AG04449 (cell line): ENCODE measurements at regions of chr5 and their contacts with region 1.

Region 1: DNA sequence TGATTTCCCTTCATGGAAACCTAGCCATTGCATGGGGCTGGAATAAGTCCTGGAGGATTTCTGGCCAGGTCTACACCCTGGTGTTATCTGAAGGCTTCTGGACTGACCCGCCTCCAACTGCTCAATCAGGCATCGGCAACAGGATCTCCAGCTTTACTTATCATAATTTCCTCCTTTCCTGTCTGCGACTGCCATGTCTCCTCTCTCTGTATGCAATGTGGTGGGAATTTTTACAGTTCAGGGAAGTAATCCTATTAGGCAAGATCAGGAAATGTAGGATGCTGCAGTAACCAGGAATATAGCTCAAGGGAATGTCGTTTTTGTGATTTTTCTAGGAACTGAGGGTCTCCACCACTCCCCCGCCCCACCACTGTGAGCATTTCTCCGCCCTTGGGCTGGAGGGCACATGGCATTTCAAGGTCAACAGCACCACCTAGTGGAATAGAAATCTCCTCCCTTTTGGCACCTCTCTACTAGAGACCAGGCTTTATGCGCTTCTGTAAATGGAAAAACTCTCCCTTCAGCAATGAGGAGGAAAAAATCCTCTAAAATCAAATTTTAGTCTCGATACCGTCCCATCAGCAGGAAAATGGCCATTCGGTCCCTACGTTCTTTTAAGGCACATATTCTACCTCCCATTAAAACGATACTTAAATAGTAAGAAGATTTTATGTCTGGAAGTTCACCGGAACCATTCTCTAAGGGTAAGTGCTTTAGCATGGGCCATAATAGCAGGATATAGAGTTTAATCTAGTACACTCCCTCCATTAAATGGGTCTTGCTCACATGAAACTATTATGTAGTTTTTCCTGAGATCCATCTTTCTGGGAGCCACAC is 93.0 kb downstream of the YTHDC2 start:
- DNase-seq: no peak
- H3K4me3 ChIP-seq: no peak overlapping the region
- CTCF ChIP-seq: peak; percentile 61

Region 2: GRCh38 chr5:113330533-113331208 is 275.8 kb before region 1 on chr5:
- CTCF ChIA-PET with region 1: no interaction called
- POLR2A ChIA-PET with region 1: no interaction called
- DNase-seq: no peak
- H3K4me3 ChIP-seq: no peak overlapping the region
- CTCF ChIP-seq: peak; percentile 10

Region 3: DNA sequence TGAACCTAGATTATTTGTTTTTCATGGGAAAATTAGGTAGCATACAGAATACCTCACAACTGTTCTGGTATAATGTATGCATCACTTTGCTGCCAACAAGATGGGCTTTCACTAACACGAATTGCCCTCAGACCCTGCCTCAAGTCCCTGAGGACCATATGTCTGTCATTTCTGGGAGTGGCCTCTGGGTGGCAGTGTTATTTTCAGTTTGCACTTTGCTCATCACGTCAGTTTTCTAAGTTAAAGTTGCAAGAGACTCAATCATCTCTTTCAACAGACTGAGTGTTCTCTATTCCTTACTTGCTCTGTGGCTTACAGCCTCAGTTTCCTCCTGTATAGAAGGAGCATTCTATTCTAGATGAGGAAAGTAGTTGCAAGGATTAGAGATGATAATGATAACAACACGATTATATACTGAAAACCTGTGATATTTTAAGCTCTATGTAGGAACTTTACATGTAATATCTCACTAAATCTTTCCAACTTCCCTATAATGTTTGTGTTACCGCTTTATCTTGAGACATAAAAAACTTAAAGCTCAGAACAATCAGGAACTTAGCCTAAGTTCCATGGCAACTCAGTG is 227.5 kb before region 1 on chr5:
- CTCF ChIA-PET with region 1: interaction called, 41 read pairs
- POLR2A ChIA-PET with region 1: no interaction called
- DNase-seq: peak; percentile 3
- H3K4me3 ChIP-seq: no peak overlapping the region
- CTCF ChIP-seq: peak; percentile 71

Region 4: DNA sequence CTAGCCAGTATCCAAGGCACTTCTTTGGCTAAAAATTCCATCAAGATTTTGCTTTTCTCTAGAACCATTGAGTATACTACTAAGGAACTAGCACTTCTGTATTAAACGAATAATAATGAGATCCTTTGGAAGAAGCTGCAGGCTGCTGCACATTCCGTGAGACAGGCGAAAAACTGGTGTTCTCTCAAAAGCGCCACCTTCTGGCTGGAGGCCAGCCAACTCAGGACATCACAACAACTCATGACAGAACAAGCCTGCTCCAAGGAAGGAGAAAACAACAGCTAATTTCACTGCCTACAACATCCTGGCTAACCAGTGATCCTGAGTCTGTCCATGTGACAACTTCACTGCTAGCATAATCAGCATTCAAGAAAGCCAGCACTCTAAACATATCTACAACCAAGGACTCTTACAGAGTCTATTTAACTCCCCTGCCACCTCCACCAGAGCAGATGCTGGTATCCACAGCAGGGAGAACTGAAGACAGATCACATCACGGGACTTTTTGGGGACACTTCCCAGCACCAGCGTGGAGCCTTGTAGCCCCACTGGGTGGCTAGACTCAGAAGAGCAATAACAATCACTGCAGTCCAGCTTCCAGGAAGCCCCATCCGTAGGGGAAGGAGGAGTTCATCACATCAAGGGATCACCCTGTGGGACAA is 57.5 kb after region 1 on chr5:
- CTCF ChIA-PET with region 1: interaction called, 85 read pairs
- POLR2A ChIA-PET with region 1: no interaction called
- DNase-seq: no peak
- H3K4me3 ChIP-seq: no peak overlapping the region
- CTCF ChIP-seq: peak; percentile 69

Region 5: DNA sequence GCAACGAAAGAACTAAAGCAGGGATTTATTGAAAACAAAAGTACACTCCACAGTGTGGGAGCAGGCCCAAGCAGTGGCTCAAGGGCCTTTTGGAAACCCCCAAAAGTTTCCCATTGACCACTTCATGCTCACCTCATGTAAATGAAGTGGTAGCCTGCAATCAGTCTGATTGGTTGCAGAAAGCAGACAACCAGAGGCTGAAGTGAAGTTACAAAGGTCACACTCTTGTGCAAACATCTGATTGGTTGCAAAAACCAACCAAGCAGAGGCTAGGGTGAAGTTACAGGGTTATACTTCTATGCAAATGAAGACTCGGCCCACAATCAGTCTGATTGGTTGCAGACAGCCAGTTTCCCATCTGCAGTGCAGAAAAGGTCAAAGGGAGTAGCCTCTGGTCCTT is 165.0 kb after region 1 on chr5:
- CTCF ChIA-PET with region 1: no interaction called
- POLR2A ChIA-PET with region 1: no interaction called
- DNase-seq: no peak
- H3K4me3 ChIP-seq: no peak overlapping the region
- CTCF ChIP-seq: no peak